ENCODE measurements at regions of chr5 and their contacts with region 1.

Region 1: GRCh38 chr5:117454716-117455596 is 880.3 kb upstream of the SEMA6A start:
- DNase-seq: no peak
- H3K4me3 ChIP-seq: no peak overlapping the region
- H3K27ac ChIP-seq: no peak overlapping the region
- H3K4me1 ChIP-seq: no peaks in the 10 kb centered on the region
- H3K27me3 ChIP-seq: no peaks in the 10 kb centered on the region
- CTCF ChIP-seq: peak; percentile 59 to 78
- POLR2A ChIP-seq: no peak

Region 2: GRCh38 chr5:116574367-116575325 is 880.3 kb before region 1 on chr5 and contains the start of gene SEMA6A:
- CTCF ChIA-PET with region 1: no interaction called
- POLR2A ChIA-PET with region 1: no interaction called
- dilution Hi-C with region 1: no loop called
- intact Hi-C with region 1: loop called (anchors 10 kb)
- DNase-seq: peak; percentile 91
- H3K4me3 ChIP-seq: peak within 1 kb of the TSS; percentile 53 to 61 (median 58)
- H3K27ac ChIP-seq: no peak within 1 kb of the TSS
- H3K4me1 ChIP-seq: peaks cover 17% of the 10 kb centered on the region
- H3K27me3 ChIP-seq: peaks cover 44 to 70% of the 10 kb centered on the region in 2 experiments
- CTCF ChIP-seq: no peak
- POLR2A ChIP-seq: no peak
- total RNA-seq, gene SEMA6A: 1.4 and 1.5 TPM in 2 replicates

Region 3: GRCh38 chr5:118956727-118957126 is 1501.8 kb after region 1 on chr5:
- CTCF ChIA-PET with region 1: no interaction called
- POLR2A ChIA-PET with region 1: no interaction called
- dilution Hi-C with region 1: no loop called
- intact Hi-C with region 1: loop called (anchors 5 kb)
- DNase-seq: peak; percentile 9
- H3K4me3 ChIP-seq: no peak overlapping the region
- H3K27ac ChIP-seq: no peak overlapping the region
- H3K4me1 ChIP-seq: no peaks in the 10 kb centered on the region
- H3K27me3 ChIP-seq: no peaks in the 10 kb centered on the region
- CTCF ChIP-seq: no peak
- POLR2A ChIP-seq: no peak